Activated CD4-positive, alpha-beta T cell treated with anti-CD3 and anti-CD28 coated beads, Interleukin-2, amount 10 ng/mL, durations not matched to agents 24 days and 14 days (primary cell): ENCODE measurements at regions of chr10 and their contacts with region 1.

Region 1: GRCh38 chr10:104254493-104255310 is at the start of gene GSTO1:
- DNase-seq: peak; percentile 87
- H3K4me3 Mint-ChIP-seq: peak within 1 kb of the TSS; percentile 96
- H3K27ac Mint-ChIP-seq: peak within 1 kb of the TSS; percentile 95
- H3K4me1 Mint-ChIP-seq: peaks cover 46% of the 10 kb centered on the region
- H3K27me3 Mint-ChIP-seq: peaks cover 14% of the 10 kb centered on the region
- total RNA-seq, gene GSTO1: 136 and 140 TPM in 2 replicates

Region 2: GRCh38 chr10:104231784-104232612 is 22.7 kb before region 1 on chr10 and contains the start of gene CFAP43:
- intact Hi-C with region 1: loop called (anchors 1 kb)
- DNase-seq: peak; percentile 100
- H3K4me3 Mint-ChIP-seq: peak within 1 kb of the TSS; percentile 87
- H3K27ac Mint-ChIP-seq: peak within 1 kb of the TSS; percentile 72
- H3K4me1 Mint-ChIP-seq: peaks cover 8% of the 10 kb centered on the region
- H3K27me3 Mint-ChIP-seq: peaks cover 42% of the 10 kb centered on the region
- total RNA-seq, gene CFAP43: not detected in 2 replicates